Dendritic cell treated with granulocyte-macrophage colony-stimulating factor and Interleukin-4, amounts not matched to agents 40 ng/mL and 50 ng/mL, for 4 days (primary cell): ENCODE measurements at regions of chr15 and their contacts with region 1.

Region 1: DNA sequence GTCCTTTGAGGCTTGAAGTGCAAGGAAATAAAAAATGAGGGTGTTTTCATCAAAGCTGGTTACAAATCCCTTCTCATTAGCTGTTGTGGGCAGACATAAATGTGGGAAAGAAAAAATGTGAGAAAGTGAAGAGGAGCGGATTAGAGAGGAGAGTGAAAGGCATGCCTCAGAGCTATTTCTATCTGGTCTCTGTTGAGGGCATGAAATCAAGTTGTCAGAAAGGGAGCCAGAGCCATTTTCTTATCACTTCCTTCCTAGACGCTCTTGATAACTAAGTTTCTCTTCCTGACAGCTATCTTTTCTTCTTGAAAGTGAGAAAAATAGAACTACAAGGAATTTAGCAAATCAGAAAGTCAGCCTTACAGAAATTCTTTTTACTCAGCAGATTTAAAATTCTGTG is 20.8 kb upstream of the CAPN3 start:
- H3K4me3 Mint-ChIP-seq: no peak overlapping the region
- H3K27ac Mint-ChIP-seq: no peak overlapping the region
- H3K4me1 Mint-ChIP-seq: no peaks in the 10 kb centered on the region
- H3K27me3 Mint-ChIP-seq: no peaks in the 10 kb centered on the region

Region 2: GRCh38 chr15:42239528-42240182 is 98.8 kb before region 1 on chr15:
- intact Hi-C with region 1: loop called (anchors 5 kb)
- H3K4me3 Mint-ChIP-seq: no peak overlapping the region
- H3K27ac Mint-ChIP-seq: no peak overlapping the region
- H3K4me1 Mint-ChIP-seq: no peaks in the 10 kb centered on the region
- H3K27me3 Mint-ChIP-seq: no peaks in the 10 kb centered on the region